Right ventricle myocardium superior (tissue), 1 donor: ENCODE measurements at regions of chr3 and their contacts with region 1.

Region 1: GRCh38 chr3:155870133-155870944 is at the start of gene GMPS:
- DNase-seq: peak; percentile 96
- ATAC-seq: peak; percentile 99
- total RNA-seq, gene GMPS: 27.6 TPM

Region 2: DNA sequence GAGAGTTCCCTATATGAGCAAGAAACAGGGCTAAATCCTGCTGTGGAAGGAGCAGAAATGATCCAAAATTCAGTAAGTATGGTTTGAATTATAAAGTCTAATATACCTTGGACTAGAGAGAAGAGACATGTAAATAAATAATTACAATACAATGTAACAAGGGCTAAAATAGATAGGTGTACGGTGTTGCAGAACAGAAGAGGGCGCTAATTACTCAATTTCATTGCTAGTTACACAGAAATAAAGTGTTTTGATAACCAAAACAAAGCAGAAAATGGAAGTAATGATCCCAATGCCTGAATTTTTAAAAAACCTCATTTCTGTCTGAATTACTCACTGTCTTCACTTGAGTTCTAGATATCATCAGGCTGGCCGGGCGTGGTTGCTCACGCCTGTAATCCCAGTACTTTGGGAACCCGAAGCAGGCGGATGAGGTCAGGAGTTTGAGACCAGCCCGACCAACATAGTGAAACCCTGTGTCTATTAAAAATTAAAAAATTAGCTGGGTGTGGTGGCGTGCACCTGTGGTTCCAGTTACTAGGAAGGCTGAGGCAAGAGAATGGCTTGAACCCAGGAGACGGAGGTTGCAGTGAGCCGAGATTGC is 117.2 kb before region 1 on chr3:
- intact Hi-C with region 1: loop called (anchors 10 kb)
- DNase-seq: no peak
- ATAC-seq: no peak

Region 3: DNA sequence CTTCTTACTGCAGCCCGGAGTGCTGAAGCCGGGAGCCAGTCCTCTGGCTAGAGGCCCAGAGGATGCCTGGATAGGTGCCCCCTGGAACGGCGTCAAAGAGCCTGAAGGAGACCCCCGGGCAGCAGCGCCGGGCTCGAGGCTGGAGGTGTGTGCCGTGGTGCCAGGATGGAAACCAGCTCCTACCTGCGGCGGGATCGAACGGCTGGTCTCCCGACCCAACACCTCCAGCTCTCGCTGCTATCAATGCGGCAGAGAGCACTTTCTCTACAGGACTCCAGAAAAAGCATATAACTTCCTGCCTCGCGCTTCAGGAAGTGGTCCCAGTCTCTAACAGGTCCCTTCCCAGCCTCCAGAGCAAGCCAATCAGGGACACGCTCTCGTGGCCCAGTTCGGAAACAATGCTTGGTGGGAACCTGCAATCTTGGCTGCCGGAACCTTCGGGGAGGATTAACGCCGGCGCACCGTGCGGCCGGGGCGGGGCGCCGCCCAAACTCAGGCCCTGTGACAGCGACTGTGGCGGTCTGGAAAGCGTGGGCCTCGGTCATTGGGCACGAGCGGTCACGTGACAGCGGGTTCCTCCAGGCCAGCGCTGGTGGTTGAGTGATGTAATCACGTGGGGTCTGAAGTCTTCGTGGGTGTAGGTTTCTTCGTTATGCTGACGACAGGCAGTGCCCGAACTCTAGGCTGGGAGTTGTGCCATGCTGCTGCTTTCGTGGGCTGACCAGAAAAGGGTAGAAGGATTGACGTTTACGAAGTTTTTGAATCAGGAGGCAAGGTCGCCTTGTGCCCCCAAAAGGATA is 16.0 kb before region 1 on chr3 and contains the start of gene SLC33A1:
- intact Hi-C with region 1: loop called (anchors 2 kb)
- DNase-seq: peak; percentile 99
- ATAC-seq: peak; percentile 98
- total RNA-seq, gene SLC33A1: 17.6 TPM